PC-3 (cell line): ENCODE measurements at regions of chr5 and their contacts with region 1.

Region 1: DNA sequence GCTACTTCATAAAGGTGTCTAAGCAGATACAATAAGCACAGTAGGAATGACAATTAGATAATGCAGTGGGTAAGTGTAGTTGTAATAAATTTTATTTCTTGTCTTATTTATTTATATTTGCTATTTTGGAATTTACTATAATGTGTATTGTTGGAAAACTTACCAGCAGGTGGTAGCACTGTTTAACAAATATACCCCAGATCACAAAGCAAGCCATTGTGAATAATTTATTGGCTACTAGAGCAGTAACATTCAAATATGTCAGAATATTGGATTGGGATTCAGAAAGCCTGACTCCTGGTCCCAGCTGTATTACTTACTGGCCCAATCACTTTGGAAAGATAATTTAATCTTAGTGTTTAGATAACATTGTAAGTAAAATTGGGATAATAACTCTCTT is 78.0 kb downstream of the ISOC1 start:
- DNase-seq: peak; percentile 25
- ATAC-seq: peak; percentile 64
- H3K4me3 ChIP-seq: no peak overlapping the region
- H3K27ac ChIP-seq: no peak overlapping the region
- H3K4me1 ChIP-seq: no peaks in the 10 kb centered on the region
- H3K27me3 ChIP-seq: peaks cover 7% of the 10 kb centered on the region; the same call in 1 of the 2 replicates
- CTCF ChIP-seq: peak; percentile 51

Region 2: GRCh38 chr5:129271303-129271702 is 98.7 kb after region 1 on chr5:
- CTCF ChIA-PET with region 1: no interaction called
- POLR2A ChIA-PET with region 1: no interaction called
- intact Hi-C with region 1: loop called (anchors 1 kb)
- DNase-seq: peak; percentile 49
- ATAC-seq: peak; percentile 58
- H3K4me3 ChIP-seq: no peak overlapping the region
- H3K27ac ChIP-seq: no peak overlapping the region
- H3K4me1 ChIP-seq: no peaks in the 10 kb centered on the region
- H3K27me3 ChIP-seq: no peaks in the 10 kb centered on the region; the same call in 1 of the 2 replicates
- CTCF ChIP-seq: peak; percentile 49; the same call in 1 of the 2 replicates